PC-9 (cell line): ENCODE measurements at regions of chr16 and their contacts with region 1.

Region 1: GRCh38 chr16:2340564-2341455 is at the start of gene ABCA3:
- DNase-seq: peak; percentile 76 to 100
- H3K4me3 ChIP-seq: peak within 1 kb of the TSS; percentile 79
- H3K27ac ChIP-seq: no peak within 1 kb of the TSS
- H3K4me1 ChIP-seq: peaks cover 7% of the 10 kb centered on the region; the same call in 1 of the 2 replicates
- H3K27me3 ChIP-seq: peaks cover 10% of the 10 kb centered on the region; the same call in 1 of the 2 replicates
- CTCF ChIP-seq: peak; percentile 93
- total RNA-seq, gene ABCA3: 6.2 and 8.0 TPM in 2 replicates

Region 2: DNA sequence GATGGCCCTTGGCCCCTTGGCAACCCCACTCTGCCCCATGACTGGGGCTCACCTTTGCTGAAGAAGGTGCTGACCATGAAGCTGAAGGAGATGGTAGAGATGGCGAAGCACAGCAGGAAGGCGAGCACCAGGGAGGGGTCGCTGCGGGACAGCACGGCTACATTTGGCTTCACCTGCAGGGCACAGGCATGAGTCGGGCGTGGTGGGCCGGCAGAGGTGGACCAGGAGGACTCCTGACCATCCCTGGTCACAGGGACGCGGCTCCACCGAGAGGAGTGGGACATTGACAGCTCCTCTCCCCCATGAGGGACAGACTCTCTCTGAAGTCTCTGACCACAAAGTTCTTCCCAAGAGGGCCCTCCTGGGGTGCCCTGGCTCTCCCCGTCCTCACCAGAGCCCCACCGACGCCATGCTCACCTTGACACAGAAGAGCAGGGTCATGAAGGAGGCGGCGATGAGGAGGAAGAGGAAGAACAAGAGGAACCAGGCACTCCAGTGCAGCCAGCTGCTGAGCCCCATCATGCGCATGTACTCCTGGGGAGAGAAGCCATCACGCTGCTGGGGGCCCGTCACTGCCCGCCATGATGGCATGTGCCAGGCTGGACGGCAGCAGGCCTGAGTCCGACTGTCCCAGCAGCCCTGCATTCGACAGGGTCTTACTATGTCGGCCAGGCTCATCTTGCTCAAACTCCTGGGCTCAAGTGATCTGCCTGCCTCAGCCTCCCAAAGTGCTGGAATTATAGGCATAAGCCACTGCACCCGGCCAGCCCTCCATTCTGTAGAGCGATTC is 23.4 kb before region 1 on chr16:
- CTCF ChIA-PET with region 1: no interaction called
- POLR2A ChIA-PET with region 1: no interaction called
- intact Hi-C with region 1: no loop called
- DNase-seq: no peak
- H3K4me3 ChIP-seq: no peak overlapping the region
- H3K27ac ChIP-seq: no peak overlapping the region
- H3K4me1 ChIP-seq: no peaks in the 10 kb centered on the region
- H3K27me3 ChIP-seq: peaks cover 25% of the 10 kb centered on the region
- CTCF ChIP-seq: no peak

Region 3: DNA sequence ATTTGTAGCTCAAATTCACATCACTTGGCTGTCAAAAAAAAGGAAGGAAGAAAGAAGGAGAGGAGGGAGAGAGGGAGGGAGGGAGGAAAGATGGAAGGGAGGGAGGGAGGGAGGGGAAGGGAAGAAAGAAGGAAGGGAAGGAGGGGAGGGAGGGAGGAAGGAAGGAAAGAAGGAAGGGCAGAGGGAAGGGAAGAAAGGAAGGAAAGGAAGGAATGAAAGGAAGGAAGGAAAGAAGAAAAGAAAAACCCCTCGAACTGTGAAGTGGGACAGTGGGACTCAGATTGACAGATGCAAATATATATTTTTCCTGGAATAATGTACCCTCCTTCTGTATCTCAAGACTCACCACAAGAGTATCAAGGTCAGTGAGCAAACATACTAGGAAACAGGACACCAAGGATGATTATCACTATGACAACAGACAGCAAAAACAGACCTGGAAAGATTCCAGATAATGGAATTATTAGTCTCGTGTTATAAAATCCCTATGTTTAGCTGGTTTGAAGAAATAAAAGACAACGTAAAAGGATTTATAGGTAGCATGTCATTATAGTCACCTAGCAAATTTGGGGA is 23.9 kb after region 1 on chr16:
- CTCF ChIA-PET with region 1: interaction called, 12 read pairs
- POLR2A ChIA-PET with region 1: no interaction called
- intact Hi-C with region 1: no loop called
- DNase-seq: peak in 1 of 2 experiments; percentile 43
- H3K4me3 ChIP-seq: no peak overlapping the region
- H3K27ac ChIP-seq: no peak overlapping the region
- H3K4me1 ChIP-seq: no peaks in the 10 kb centered on the region
- H3K27me3 ChIP-seq: peaks cover 59% of the 10 kb centered on the region
- CTCF ChIP-seq: no peak

Region 4: GRCh38 chr16:2415085-2415484 is 74.3 kb after region 1 on chr16:
- CTCF ChIA-PET with region 1: no interaction called
- POLR2A ChIA-PET with region 1: no interaction called
- intact Hi-C with region 1: loop called (anchors 5 kb)
- DNase-seq: no peak
- H3K4me3 ChIP-seq: no peak overlapping the region
- H3K27ac ChIP-seq: no peak overlapping the region
- H3K4me1 ChIP-seq: no peaks in the 10 kb centered on the region
- H3K27me3 ChIP-seq: peaks cover 16% of the 10 kb centered on the region; the same call in 1 of the 2 replicates
- CTCF ChIP-seq: no peak

Region 5: DNA sequence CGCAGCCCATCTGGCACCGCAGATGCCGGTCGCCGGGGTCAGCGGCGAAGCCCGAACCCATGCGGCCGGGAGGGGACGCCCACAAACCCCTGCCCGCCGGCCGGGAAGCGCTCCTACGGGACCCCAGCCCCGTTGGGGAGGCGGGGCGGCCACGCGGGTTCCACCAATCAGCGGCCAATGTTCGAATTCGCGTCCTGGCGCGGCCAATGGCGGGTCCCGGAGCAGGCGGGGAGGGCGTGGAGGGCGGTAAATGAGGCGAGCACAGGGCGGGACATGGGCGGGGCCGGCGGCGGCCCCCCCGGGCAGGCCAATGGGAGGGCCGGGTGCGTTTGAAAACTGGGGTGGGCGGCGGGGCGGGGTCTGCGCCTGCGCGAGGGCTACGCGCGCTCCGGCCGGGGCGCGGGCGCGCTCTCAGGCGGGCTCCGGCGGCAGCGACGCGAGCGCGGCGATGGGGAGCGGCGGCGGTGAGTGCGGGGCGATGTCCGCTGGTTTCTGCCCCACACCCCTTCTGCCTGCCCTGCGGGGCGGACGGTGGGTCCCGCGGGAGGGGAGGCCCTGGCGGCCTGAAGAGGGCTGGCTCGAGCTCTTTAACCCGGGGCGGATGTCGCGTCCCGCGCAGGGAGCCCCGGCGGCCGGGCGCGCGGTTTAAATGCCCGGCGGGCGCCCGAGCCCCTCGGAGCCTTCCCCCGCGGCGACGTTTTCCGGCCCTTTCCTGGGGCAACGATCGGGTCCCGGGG is 88.4 kb after region 1 on chr16 and contains the start of gene CCNF:
- CTCF ChIA-PET with region 1: interaction called, 4 read pairs
- POLR2A ChIA-PET with region 1: no interaction called
- intact Hi-C with region 1: loop called (anchors 2 kb)
- DNase-seq: peak; percentile 80 to 98
- H3K4me3 ChIP-seq: peak within 1 kb of the TSS; percentile 99
- H3K27ac ChIP-seq: no peak within 1 kb of the TSS
- H3K4me1 ChIP-seq: peaks cover 40% of the 10 kb centered on the region
- H3K27me3 ChIP-seq: no peaks in the 10 kb centered on the region
- CTCF ChIP-seq: no peak
- total RNA-seq, gene CCNF: 53.4 and 69.0 TPM in 2 replicates

Region 6: DNA sequence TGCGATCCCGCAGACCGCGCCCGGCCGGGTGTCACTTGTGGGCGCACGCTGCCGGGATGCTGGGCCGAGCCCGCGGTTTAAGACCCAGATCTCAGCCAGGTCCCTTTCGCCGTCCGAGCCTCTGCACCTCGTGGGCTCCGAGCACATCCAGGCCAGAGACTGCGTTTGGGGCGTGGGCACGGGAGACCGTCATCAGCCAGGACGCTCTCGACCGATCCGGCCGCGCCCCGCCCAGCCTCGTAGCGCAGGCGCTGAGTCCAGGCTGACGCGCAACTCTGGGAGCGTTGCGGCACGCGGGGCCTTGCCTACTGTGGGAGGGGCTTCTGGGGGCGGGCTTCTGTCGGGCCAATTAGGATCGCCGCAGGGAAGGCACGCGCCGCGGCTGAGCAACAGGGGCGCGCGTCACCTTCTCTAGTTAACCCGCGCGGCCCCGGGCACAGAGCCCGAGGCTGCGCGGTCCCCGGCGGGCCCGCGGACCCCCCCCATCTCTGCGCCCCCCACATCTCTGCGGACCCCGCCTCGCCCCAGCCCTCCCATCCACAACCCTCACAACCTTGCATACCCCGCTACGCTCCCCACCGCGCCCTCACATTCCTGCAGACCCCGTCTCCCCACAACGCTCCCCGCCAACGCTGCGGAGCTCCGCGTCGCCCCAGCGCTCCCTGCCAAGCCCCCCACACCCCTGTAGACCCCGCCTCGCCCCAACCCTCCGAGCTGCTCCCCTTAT is 191.1 kb after region 1 on chr16:
- CTCF ChIA-PET with region 1: no interaction called
- POLR2A ChIA-PET with region 1: no interaction called
- intact Hi-C with region 1: no loop called
- DNase-seq: peak; percentile 91 to 99
- H3K4me3 ChIP-seq: peak overlapping the region; percentile 57
- H3K27ac ChIP-seq: peak overlapping the region; percentile 38
- H3K4me1 ChIP-seq: peaks cover 18% of the 10 kb centered on the region; the same call in 1 of the 2 replicates
- H3K27me3 ChIP-seq: no peaks in the 10 kb centered on the region
- CTCF ChIP-seq: no peak

Region 7: GRCh38 chr16:2897113-2897512 is 556.3 kb after region 1 on chr16:
- CTCF ChIA-PET with region 1: no interaction called
- POLR2A ChIA-PET with region 1: no interaction called
- intact Hi-C with region 1: no loop called
- DNase-seq: no peak
- H3K4me3 ChIP-seq: no peak overlapping the region
- H3K27ac ChIP-seq: no peak overlapping the region
- H3K4me1 ChIP-seq: no peaks in the 10 kb centered on the region
- H3K27me3 ChIP-seq: no peaks in the 10 kb centered on the region
- CTCF ChIP-seq: no peak